Activated B cell treated with CpG ODN at 0.5 μM for 24 hours (primary cell): ENCODE measurements at regions of chr12 and their contacts with region 1.

Region 1: GRCh38 chr12:105164068-105164467 is 56.5 kb downstream of the WASHC4 start:
- DNase-seq: no peak
- ATAC-seq: no peak
- H3K4me3 Mint-ChIP-seq: no peak overlapping the region
- H3K27ac Mint-ChIP-seq: peak overlapping the region; percentile 41
- H3K4me1 Mint-ChIP-seq: no peaks in the 10 kb centered on the region
- H3K27me3 Mint-ChIP-seq: no peaks in the 10 kb centered on the region
- CTCF ChIP-seq: no peak

Region 2: DNA sequence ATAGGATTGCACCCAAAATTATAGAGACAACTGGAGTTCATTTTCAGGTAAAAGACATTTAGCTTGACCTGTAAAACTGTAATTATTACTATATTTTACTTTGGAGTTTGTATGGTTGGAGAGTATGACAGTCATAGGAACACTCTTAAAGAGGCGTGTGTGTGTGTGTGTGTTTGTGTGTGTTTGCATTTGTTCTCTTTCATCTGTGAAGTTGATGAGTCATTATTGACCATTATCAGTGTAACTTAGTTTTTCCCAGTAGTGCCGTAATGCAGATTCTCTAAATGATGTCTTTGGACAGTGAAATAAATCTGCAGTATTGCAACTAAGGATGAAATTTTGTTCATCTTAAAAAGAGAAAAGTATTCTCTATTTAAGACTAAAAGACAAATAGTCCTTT is 43.5 kb before region 1 on chr12:
- CTCF ChIA-PET with region 1: no interaction called
- POLR2A ChIA-PET with region 1: no interaction called
- intact Hi-C with region 1: loop called (anchors 5 kb)
- DNase-seq: no peak
- ATAC-seq: no peak
- H3K4me3 Mint-ChIP-seq: no peak overlapping the region
- H3K27ac Mint-ChIP-seq: no peak overlapping the region
- H3K4me1 Mint-ChIP-seq: peaks cover 4% of the 10 kb centered on the region
- H3K27me3 Mint-ChIP-seq: no peaks in the 10 kb centered on the region
- CTCF ChIP-seq: no peak